ENCODE measurements at regions of chr14 and their contacts with region 1.

Region 1: DNA sequence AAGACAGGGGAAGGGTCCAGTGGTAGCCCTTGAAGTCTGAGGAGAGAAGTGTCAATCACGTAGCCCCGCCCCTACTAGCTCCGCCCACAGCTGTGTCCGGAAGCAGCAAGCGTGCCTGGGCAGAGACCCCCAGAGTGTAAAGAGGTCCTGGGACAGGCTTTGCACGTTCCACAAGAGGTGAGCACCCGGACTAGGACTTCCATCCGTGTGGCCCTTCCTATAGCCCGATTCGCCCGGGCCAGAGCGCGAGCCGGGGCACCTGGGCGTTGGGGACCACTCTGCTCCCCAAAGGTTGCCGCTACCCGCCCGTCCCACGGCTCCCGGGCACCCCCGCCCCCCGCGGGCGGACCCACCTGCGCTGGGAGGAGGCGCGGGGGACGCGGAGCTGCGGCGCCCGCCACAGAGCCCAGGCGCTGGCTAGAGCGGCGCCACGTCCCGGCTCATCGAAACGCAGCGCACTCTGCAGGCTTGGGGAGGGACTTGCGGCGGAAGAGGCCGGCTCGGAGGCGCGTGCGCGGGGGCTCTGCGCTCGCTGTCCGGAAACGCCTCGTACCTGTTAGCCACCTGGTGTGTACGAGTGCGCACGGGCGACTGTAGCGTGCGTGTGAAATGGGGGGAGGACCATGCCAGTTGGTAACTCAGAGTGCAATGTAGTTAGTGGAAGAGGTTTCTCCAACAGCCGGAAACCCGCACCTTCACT is at the start of gene RABGGTA:
- DNase-seq: peak; percentile 87
- H3K4me3 Mint-ChIP-seq: peak within 1 kb of the TSS; percentile 86
- H3K27ac Mint-ChIP-seq: peak within 1 kb of the TSS; percentile 89
- H3K4me1 Mint-ChIP-seq: peaks cover 30% of the 10 kb centered on the region
- H3K27me3 Mint-ChIP-seq: no peaks in the 10 kb centered on the region
- total RNA-seq, gene RABGGTA: 33.9 and 38.4 TPM in 2 replicates

Region 2: DNA sequence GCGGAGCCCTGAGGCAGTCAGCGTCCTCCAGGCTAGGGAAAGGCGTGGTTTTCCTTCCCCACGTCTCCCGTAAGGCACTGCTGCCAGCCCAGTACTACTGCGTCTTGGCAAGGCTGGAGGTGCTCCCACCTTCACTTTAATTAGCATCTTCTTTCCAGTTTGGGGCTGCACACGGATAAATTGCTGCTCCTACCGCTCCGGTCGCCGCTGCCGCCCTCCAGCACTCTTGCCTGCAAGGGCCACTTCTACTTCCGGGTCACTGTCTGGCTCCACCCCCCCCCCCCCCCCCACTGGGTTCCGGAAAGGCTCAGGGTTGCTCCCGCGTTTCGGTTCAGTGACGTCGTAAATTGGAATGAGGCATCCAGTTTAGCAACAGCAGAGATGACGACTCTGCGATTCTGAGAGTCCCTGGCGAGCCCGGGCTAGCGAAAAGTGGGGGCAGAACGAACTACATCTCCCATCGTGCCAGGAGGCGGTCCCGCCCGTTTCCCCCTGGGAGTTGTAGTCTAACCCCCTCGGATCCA is 39.1 kb before region 1 on chr14 and contains the start of gene NEDD8:
- intact Hi-C with region 1: loop called (anchors 1 kb)
- DNase-seq: peak; percentile 89
- H3K4me3 Mint-ChIP-seq: peak within 1 kb of the TSS; percentile 97
- H3K27ac Mint-ChIP-seq: peak within 1 kb of the TSS; percentile 91
- H3K4me1 Mint-ChIP-seq: peaks cover 44% of the 10 kb centered on the region
- H3K27me3 Mint-ChIP-seq: no peaks in the 10 kb centered on the region
- total RNA-seq, gene NEDD8: 194 and 202 TPM in 2 replicates

Region 3: DNA sequence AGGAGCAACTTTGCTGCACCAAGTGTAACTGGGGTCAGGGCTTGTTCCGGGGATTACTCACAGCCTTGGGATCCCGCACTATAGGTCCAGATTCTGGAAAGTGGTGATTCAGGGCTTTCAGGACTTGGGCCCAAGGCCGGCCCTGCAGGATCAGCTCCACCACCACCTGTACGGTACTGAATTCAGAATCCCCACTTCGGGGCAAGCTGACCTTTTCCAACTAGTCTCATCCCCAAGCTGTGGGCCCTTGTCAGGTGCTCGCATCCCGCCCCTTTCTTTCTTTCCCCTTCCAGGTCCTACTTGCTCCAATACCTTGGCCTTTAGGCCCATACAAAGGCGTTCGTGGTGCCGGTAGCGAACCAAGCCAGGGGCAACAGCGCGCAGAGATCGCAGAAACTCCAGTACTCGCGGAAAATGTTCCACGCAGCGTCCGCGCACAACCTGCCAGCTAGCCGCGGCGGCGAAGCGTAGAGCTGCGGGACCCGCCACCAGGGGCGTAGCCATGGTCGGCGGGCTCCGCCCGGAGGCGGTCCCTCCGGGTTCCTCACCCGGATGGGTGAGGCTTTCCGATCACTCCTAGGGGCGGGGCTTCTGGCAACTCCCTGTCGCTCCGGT is 29.3 kb before region 1 on chr14:
- intact Hi-C with region 1: loop called (anchors 1 kb)
- DNase-seq: peak; percentile 93
- H3K4me3 Mint-ChIP-seq: peak overlapping the region; percentile 86
- H3K27ac Mint-ChIP-seq: peak overlapping the region; percentile 98
- H3K4me1 Mint-ChIP-seq: peaks cover 46% of the 10 kb centered on the region
- H3K27me3 Mint-ChIP-seq: no peaks in the 10 kb centered on the region

Region 4: DNA sequence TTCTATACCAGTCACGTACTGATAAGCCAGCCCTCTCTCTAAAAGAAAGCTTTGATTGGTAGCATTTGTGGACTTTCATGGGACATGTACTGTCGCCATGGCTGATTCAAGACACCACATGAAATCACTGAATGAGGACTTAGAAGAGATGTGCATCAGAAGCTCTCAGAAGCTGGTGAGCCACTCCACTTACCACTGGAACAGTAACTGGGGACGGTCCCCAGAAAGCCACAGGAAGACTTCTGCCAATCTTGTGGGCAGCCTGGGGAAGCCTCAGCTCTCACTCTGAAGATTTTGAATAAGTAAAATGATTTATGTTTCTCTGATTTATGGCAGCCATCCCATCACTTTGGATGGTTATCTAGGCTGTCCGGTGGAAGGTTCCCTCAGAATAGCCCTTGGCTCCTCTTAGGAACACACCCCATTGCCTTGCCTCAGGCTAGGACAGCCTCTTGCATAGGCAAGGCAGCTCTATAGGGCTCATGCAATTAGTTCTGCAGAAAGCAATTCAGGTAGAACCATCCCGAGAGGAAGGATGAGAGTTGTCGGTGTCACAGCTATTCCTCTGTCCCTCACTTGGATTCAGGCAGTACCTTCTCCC is 18.5 kb after region 1 on chr14:
- intact Hi-C with region 1: loop called (anchors 1 kb)
- DNase-seq: no peak
- H3K4me3 Mint-ChIP-seq: no peak overlapping the region
- H3K27ac Mint-ChIP-seq: no peak overlapping the region
- H3K4me1 Mint-ChIP-seq: peaks cover 13% of the 10 kb centered on the region
- H3K27me3 Mint-ChIP-seq: peaks cover 18% of the 10 kb centered on the region

Region 5: DNA sequence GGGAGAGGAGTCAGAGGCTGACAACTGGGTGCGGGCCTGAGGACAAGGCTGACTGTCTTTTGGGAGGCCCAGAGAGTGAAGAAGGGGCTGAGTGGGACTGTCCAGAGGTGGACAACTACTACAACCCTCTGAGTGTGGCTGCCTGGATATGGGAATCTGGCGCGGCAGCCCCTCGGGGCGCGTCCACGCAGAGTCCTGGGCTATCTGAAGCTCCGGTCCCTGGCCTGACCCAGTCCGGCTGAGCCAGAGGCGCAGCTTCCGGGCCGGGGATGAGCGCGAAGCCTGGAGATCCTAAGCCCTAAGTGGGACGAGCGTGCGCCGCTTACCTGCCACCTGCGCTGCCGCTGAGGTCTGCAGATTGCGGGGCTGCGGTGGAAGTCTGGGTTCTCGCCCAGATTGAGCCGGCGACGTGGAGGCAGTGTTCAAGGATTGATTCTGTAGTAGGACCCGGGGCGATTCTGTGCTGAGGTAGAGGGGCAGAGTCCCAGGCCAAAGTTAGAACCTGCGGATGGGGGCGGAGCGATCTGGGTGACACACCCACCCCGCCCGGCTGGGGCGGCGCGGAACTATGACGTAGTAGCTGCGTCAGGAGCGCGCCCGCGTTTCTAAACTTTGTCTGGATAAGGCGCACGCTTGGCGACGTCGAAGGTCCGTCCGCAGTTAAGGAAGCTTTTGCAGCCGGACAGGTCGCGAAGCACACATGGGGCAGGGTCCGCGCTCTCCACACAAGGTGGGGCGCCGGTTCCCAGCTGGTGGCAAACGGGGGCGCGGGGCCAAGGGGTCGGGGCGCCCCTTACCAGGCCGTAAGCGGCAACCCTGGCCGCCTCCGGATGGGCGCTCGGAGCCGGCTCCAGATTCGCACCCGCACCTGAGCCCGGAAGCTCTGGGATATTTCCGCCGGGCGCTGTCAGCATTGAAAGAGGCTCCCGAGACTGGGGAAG is 28.2 kb after region 1 on chr14 and contains the starts of genes DHRS1 and NOP9:
- intact Hi-C with region 1: loop called (anchors 1 kb)
- DNase-seq: peak; percentile 89
- H3K4me3 Mint-ChIP-seq: peak within 1 kb of the TSS; percentile 90
- H3K27ac Mint-ChIP-seq: peak within 1 kb of the TSS; percentile 88
- H3K4me1 Mint-ChIP-seq: peaks cover 33% of the 10 kb centered on the region
- H3K27me3 Mint-ChIP-seq: no peaks in the 10 kb centered on the region
- total RNA-seq, gene DHRS1: 9.7 and 10.4 TPM in 2 replicates
- total RNA-seq, gene NOP9: 39.7 and 42.0 TPM in 2 replicates

Measured in activated T-helper 2 cell treated with anti-CD3 and anti-CD28 coated beads, Interferon-gamma antibody, Interleukin-2, Interleukin-4, amounts not matched to agents 10 μg/mL and 5 μg/mL and 100 μg/mL, durations not matched to agents 14 hours and 24 hours and 36 hours (primary cell).